Aorta (tissue), 5 donors: ENCODE measurements at regions of chr9 and their contacts with region 1.

Region 1: DNA sequence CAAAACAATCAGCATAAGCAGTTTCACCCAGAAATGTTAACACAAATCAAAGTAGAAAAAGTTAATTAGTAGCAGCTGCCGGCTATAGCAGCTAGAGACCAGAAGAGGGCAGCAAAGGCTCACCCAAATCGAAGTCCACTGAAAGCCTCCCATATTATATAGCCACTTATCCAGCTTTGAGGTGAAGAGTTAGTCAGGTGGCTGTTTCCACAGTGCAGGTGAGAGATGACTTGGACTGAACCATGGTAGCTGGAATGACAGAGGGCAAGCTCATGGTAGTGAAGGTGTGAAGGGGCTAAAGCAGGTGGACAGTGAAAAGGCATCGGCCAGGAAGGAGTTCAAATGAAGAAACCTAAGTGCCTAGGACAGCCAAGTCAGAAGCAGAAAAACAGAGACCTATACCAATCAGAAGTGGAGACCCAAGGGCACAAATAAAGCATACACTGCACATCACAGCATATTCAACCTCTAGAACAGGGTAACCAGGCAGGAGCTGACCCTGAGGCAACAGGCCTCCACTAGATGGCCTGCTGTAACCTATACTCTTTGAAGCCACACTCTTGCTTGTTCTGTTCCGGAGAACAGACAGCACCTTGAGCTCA is 7.2 kb upstream of the RNF38 start:
- DNase-seq: no peak
- ATAC-seq: peak; percentile 92
- H3K4me3 ChIP-seq: no peak overlapping the region
- H3K27ac ChIP-seq: no peak overlapping the region
- H3K4me1 ChIP-seq: no peaks in the 10 kb centered on the region
- H3K27me3 ChIP-seq: no peaks in the 10 kb centered on the region

Region 2: DNA sequence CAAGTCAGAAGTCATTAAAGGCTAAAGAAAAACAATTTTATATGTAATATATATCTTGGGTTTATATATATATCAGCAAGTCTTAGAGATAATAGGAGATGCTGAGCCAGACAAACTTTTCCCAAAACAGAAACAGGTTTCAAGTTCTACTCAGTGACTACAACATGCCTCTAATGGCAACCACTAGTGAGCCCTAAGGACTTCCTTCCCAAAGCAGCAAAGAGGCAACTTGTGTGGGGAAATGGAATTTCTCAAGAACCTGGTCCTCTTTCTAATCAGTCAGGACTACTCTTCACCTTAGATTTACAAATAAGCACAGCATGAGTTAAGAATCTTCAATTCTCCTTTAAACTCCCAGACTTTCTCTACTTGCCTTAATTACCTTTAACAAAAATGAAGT is 24.7 kb before region 1 on chr9:
- intact Hi-C with region 1: no loop called
- DNase-seq: no peak
- ATAC-seq: no peak
- H3K4me3 ChIP-seq: no peak overlapping the region
- H3K27ac ChIP-seq: no peak overlapping the region
- H3K4me1 ChIP-seq: peaks cover 0 to 1% of the 10 kb centered on the region in 2 donors
- H3K27me3 ChIP-seq: no peaks in the 10 kb centered on the region

Region 3: GRCh38 chr9:36436909-36437308 is 29.7 kb after region 1 on chr9:
- intact Hi-C with region 1: no loop called
- DNase-seq: no peak
- ATAC-seq: no peak
- H3K4me3 ChIP-seq: no peak overlapping the region
- H3K27ac ChIP-seq: no peak overlapping the region
- H3K4me1 ChIP-seq: no peaks in the 10 kb centered on the region
- H3K27me3 ChIP-seq: no peaks in the 10 kb centered on the region

Region 4: GRCh38 chr9:36450110-36450732 is 43.0 kb after region 1 on chr9:
- intact Hi-C with region 1: no loop called
- DNase-seq: no peak
- ATAC-seq: no peak
- H3K4me3 ChIP-seq: no peak overlapping the region
- H3K27ac ChIP-seq: no peak overlapping the region
- H3K4me1 ChIP-seq: no peaks in the 10 kb centered on the region
- H3K27me3 ChIP-seq: no peaks in the 10 kb centered on the region

Region 5: GRCh38 chr9:36560857-36561221 is 153.6 kb after region 1 on chr9:
- intact Hi-C with region 1: loop called (anchors 2 kb)
- DNase-seq: no peak
- ATAC-seq: no peak
- H3K4me3 ChIP-seq: no peak overlapping the region
- H3K27ac ChIP-seq: no peak overlapping the region
- H3K4me1 ChIP-seq: no peaks in the 10 kb centered on the region
- H3K27me3 ChIP-seq: no peaks in the 10 kb centered on the region